Activated naive CD4-positive, alpha-beta T cell treated with anti-CD3 and anti-CD28 coated beads for 36 hours (primary cell): ENCODE measurements at regions of chr6 and their contacts with region 1.

Region 1: DNA sequence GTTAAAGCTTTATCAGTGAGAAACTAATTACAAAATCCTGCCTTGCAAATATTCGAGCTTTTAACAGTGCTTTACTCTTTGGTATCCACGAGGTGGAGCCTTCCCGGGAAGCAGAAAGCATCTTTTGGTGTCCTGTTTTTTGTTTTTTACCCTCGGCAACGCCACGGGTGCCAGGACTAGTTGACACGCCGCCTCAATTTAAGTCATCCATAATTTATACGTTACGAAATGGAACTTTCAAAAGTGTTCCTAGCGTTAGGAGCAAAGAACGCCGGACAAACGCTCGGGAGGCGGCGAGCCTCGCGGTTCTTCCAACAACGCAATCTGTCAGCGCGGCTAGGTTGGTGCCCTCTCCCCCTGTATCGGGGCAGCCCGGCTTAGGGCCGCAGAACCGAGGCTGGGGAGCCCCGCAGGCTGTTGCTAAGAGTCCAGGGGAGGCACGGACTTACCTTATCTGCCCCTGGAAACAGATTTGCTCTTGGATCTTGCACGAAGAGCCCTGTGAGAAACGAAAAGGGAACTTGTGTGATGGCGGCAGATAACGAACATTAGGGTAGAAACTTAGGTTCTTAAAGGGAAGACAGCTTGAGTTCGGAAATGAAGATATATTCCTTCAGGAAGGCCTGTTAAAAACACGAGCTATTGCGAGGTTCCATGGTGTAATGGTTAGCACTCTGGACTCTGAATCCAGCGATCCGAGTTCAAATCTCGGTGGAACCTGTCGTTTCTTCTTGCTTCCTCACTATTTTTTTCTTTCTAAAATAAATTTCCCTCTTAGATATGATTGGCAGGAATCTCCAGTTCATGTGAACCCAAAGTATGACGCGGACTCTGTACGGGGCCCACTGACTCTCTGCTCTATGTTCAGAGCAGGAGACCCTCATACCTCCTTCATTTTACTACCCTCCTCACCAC is 46.2 kb upstream of the ZNF184 start:
- DNase-seq: peak; percentile 82
- H3K4me3 Mint-ChIP-seq: peak overlapping the region; percentile 76
- H3K27ac Mint-ChIP-seq: peak overlapping the region; percentile 81
- H3K4me1 Mint-ChIP-seq: peaks cover 18% of the 10 kb centered on the region
- H3K27me3 Mint-ChIP-seq: peaks cover 10% of the 10 kb centered on the region

Region 2: DNA sequence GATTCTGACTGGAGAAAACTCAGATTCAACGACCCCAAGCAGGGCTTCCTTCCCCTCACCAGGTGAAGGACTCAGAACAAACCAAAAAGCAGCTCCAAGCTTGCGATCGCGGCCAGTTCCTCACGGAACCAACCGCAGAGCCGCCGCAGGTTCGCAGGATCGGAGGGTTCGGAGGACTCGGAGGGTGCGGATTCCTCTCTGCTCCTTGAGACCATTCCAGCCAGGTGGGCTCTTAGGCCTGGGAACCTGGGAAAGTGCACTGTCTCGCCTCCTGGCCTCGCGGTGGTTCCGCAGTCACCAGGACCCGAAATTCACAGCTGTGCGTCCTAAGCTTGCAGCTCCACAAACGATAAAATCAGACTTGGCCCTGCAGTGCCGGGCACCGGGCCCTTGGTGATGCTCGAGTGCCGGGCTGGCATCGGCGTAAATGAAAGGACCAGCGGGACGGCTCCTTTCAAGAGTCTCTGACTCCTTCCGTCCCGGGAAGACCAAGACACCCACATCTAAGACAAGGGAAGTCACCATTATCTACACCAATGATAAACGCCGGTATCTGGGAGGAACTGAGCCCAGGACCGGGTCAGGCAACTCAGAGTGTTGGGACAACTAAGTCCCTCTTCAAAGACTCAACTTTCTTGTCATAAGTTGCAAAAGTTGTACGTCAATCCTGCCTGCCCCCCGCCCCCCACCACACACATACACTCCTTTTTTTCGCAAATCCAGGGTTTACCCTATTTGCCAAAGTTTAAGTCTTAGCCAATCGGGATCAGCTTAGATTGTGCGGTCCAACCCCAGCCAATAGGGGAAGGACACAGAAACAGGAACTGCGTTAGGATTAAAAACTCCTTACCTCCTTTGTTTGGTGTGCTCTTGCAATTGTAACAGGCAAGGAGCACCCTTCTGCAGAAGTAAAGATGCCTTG is 341.4 kb before region 1 on chr6:
- CTCF ChIA-PET with region 1: no interaction called
- intact Hi-C with region 1: loop called (anchors 2 kb)
- DNase-seq: peak; percentile 83
- H3K4me3 Mint-ChIP-seq: peak overlapping the region; percentile 92
- H3K27ac Mint-ChIP-seq: peak overlapping the region; percentile 87
- H3K4me1 Mint-ChIP-seq: peaks cover 4% of the 10 kb centered on the region
- H3K27me3 Mint-ChIP-seq: peaks cover 6% of the 10 kb centered on the region

Region 3: GRCh38 chr6:27312146-27312949 is 206.8 kb before region 1 on chr6 and contains the start of gene POM121L2:
- CTCF ChIA-PET with region 1: interaction called, 4 read pairs
- intact Hi-C with region 1: loop called (anchors 5 kb)
- DNase-seq: peak; percentile 79
- H3K4me3 Mint-ChIP-seq: peak within 1 kb of the TSS; percentile 72
- H3K27ac Mint-ChIP-seq: no peak within 1 kb of the TSS
- H3K4me1 Mint-ChIP-seq: peaks cover 10% of the 10 kb centered on the region
- H3K27me3 Mint-ChIP-seq: peaks cover 62% of the 10 kb centered on the region
- total RNA-seq, gene POM121L2: not detected

Region 4: DNA sequence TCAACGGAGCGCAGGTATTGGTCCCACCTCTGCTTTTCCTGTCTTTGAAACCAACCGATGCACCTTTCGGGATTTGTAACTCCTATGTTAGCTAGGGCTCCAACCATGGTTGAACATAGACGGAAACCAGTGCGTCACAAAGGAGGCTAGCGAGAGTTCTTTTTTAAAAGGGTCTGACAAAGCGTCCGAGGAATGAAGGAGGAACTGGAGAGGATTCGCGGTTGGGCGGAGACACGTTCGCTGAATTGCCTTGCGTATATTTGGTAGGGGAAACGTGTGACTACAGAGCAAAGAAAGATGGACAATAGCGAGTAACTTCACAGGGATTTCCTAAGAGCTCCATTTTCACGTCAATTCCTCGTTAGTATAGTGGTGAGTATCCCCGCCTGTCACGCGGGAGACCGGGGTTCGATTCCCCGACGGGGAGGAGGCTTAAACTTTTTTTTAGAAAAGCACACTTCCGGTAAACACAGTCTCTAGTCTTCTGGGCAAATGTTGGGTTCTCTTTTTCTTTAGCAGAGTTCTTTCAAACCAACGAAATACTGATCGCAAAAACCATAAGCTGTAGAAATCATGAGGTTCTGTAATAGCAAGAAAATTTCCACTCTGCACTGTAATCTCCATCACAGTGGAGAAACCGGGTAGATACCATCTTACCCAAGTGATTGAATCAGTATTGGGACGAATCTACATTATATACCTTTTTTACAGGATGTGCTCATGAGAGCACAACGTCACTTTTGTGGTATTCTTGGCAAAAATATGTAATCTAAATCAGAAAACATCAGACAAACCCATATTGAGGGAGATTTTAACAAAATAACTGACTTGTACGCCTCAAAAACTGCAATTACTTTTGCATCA is 39.6 kb before region 1 on chr6:
- CTCF ChIA-PET with region 1: no interaction called
- intact Hi-C with region 1: loop called (anchors 1 kb)
- DNase-seq: peak; percentile 90
- H3K4me3 Mint-ChIP-seq: no peak overlapping the region
- H3K27ac Mint-ChIP-seq: no peak overlapping the region
- H3K4me1 Mint-ChIP-seq: peaks cover 6% of the 10 kb centered on the region
- H3K27me3 Mint-ChIP-seq: no peaks in the 10 kb centered on the region

Region 5: DNA sequence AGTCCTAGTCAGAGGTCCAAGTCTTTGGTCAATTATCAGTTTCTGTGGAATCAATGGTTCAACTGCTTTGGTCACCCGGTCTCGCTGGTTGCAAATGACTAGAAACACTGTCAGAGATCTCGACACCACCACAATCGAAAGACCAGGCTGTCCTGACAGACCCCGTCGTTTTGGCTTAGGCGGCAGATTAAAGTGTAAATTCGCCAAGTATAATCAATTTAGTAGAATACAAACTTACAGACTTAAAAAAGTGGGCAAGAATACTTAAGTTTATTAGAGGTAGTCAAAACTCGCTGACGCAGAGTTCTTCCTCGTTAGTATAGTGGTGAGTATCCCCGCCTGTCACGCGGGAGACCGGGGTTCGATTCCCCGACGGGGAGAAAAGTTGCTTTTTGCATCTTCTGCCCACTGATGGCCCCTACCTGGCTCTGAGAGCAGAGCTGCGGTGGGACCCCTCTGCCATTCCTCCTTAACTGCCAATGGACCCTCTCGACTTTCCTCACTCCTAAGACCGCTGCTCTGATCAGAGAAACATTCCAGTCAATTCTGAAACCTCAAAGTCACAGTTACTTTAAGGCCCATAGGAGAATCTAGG is 15.6 kb before region 1 on chr6:
- CTCF ChIA-PET with region 1: interaction called, 11 read pairs
- intact Hi-C with region 1: loop called (anchors 1 kb)
- DNase-seq: peak; percentile 88
- H3K4me3 Mint-ChIP-seq: peak overlapping the region; percentile 90
- H3K27ac Mint-ChIP-seq: peak overlapping the region; percentile 86
- H3K4me1 Mint-ChIP-seq: peaks cover 24% of the 10 kb centered on the region
- H3K27me3 Mint-ChIP-seq: peaks cover 1% of the 10 kb centered on the region

Region 6: GRCh38 chr6:27553123-27553904 is 34.2 kb after region 1 on chr6:
- CTCF ChIA-PET with region 1: no interaction called
- intact Hi-C with region 1: no loop called
- DNase-seq: peak; percentile 53
- H3K4me3 Mint-ChIP-seq: peak overlapping the region; percentile 34
- H3K27ac Mint-ChIP-seq: peak overlapping the region; percentile 14
- H3K4me1 Mint-ChIP-seq: peaks cover 13% of the 10 kb centered on the region
- H3K27me3 Mint-ChIP-seq: peaks cover 70% of the 10 kb centered on the region

Region 7: DNA sequence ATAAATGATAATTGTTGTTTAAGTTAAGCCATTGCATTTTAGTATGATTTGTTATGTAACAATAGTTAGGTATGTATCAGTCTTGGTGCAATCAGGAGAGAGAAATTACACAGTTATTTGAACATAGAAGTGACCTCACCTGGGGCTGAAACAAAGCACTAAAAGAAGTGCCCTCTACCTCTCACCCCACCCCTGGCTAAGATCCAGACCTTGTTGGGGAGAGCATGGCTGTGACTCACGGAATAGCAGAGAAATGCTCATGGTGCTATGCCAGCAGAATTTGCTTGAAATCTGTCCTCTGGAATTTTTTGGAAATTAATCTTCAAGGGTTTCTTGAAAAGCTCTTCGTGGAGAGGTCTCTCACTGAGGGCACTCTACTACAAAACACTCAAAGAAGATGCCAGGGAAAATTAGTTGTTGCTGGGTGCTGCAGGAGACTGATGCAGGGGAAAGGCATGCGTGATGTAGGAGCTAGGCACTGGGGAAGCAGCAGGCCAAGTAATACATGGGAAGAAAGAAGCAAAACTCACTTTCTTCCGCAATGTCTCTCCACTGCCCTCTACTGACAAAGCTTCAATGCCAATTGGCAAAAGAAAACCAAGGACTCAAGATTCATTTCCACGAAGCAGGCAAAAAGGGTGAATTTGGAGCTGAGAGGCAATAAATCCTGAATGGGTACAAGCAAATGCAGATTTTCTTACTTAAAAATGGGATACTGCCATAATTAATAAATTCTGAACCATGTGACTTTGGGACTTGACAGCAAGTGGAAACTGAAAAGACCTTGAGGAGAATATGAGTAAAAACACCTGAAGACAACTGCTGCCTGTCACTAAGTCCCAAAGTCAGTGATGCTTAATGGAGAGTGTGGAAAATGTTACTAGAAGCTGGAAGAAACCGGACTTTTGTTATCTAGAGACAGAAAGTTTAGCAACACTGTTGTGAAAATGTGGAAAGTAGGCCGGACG is 90.1 kb after region 1 on chr6:
- CTCF ChIA-PET with region 1: interaction called, 11 read pairs
- intact Hi-C with region 1: loop called (anchors 2 kb)
- DNase-seq: peak; percentile 30
- H3K4me3 Mint-ChIP-seq: no peak overlapping the region
- H3K27ac Mint-ChIP-seq: no peak overlapping the region
- H3K4me1 Mint-ChIP-seq: peaks cover 13% of the 10 kb centered on the region
- H3K27me3 Mint-ChIP-seq: peaks cover 51% of the 10 kb centered on the region

Region 8: GRCh38 chr6:27795697-27796494 is 276.8 kb after region 1 on chr6:
- CTCF ChIA-PET with region 1: interaction called, 3 read pairs
- intact Hi-C with region 1: loop called (anchors 2 kb)
- DNase-seq: peak; percentile 59
- H3K4me3 Mint-ChIP-seq: no peak overlapping the region
- H3K27ac Mint-ChIP-seq: no peak overlapping the region
- H3K4me1 Mint-ChIP-seq: peaks cover 16% of the 10 kb centered on the region
- H3K27me3 Mint-ChIP-seq: peaks cover 5% of the 10 kb centered on the region